ENCODE measurements at regions of chr14 and their contacts with region 1.

Region 1: DNA sequence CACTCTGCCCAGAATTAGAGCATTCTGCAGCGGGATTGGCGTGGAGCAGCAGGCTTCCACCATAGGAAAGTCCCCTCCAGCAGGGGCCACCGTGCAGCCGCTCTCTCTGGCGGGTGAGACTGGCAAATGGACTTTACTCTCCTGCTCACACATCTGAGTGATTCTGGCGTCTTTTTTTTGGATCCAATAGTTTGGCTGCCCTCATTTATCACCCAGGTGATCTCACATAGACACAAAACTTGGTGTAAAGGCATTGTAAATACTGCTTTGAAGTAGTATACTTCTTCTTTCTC is 130.3 kb downstream of the TGFB3 start:
- DNase-seq: no peak
- H3K4me3 ChIP-seq: no peak overlapping the region
- H3K27ac ChIP-seq: no peak overlapping the region
- H3K4me1 ChIP-seq: no peaks in the 10 kb centered on the region
- H3K27me3 ChIP-seq: no peaks in the 10 kb centered on the region
- CTCF ChIP-seq: no peak

Region 2: DNA sequence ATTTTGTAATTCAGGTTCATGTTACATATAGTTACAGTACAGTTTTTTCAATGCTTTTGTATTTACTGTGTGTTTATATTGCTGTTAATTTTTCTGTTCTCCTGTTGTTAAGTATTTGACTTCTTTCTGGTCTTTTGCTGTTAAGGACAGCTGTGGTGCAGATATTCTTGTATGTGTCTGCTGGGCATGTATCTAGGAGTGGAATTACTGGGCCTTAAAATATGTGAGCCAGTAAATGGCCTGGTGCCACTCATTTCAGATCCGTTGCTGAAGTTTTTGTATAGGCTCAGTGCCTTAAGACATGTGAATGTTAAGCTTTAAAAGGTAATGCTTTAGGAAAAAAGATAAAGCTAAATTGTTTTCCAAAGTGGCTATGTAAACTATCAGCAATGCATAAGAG is 103.2 kb before region 1 on chr14:
- CTCF ChIA-PET with region 1: no interaction called
- dilution Hi-C with region 1: loop called (anchors 5 kb)
- in situ Hi-C with region 1: no loop called
- intact Hi-C with region 1: no loop called
- DNase-seq: no peak
- H3K4me3 ChIP-seq: no peak overlapping the region
- H3K27ac ChIP-seq: no peak overlapping the region
- H3K4me1 ChIP-seq: no peaks in the 10 kb centered on the region
- H3K27me3 ChIP-seq: no peaks in the 10 kb centered on the region
- CTCF ChIP-seq: no peak

Region 3: DNA sequence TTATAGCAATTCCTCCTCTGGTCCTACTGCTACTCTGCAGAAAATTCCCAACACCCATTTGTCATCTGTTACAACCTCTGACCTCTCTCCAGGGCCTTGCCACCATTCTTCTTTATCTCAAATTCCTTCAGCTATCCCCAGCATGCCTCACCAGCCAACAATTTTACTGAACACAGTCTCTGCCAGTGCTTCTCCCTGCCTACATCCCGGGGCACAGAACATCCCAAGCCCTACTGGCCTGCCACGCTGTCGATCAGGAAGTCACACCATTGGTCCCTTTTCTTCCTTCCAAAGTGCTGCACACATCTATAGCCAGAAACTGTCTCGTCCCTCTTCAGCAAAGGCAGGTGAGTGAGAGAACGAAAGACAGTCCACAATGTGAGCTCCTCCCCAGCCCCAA is 68.3 kb before region 1 on chr14:
- CTCF ChIA-PET with region 1: no interaction called
- dilution Hi-C with region 1: no loop called
- in situ Hi-C with region 1: no loop called
- intact Hi-C with region 1: no loop called
- DNase-seq: no peak
- H3K4me3 ChIP-seq: no peak overlapping the region
- H3K27ac ChIP-seq: no peak overlapping the region
- H3K4me1 ChIP-seq: no peaks in the 10 kb centered on the region
- H3K27me3 ChIP-seq: no peaks in the 10 kb centered on the region
- CTCF ChIP-seq: no peak

Region 4: DNA sequence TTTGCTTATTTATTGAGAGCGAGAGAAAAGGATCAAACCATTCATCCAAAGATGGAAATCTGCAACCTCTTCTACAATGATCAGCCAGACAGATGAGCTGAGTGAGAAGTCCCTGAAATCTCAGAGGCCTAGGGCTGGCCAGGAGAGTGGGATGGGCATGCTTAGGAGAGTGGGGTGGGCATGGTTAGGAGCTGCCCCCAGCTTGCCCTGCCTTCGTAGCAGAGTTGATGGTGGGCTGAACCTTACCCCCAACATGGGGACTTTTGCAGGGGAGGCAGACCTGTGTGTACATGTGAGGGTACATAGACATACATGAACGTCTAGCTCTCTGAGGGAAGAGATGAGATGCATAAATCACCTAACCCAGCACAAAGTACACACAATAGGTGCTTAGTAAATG is 428.7 kb after region 1 on chr14:
- CTCF ChIA-PET with region 1: no interaction called
- dilution Hi-C with region 1: no loop called
- in situ Hi-C with region 1: no loop called
- intact Hi-C with region 1: no loop called
- DNase-seq: no peak
- H3K4me3 ChIP-seq: no peak overlapping the region
- H3K27ac ChIP-seq: no peak overlapping the region
- H3K4me1 ChIP-seq: no peaks in the 10 kb centered on the region
- H3K27me3 ChIP-seq: no peaks in the 10 kb centered on the region
- CTCF ChIP-seq: no peak

Measured in mammary epithelial cell (primary cell).